ENCODE measurements at regions of chr9 and their contacts with region 1.

Region 1: GRCh38 chr9:121698627-121699570 is 47.5 kb downstream of the DAB2IP start:
- DNase-seq: peak; percentile 47
- H3K4me3 Mint-ChIP-seq: peak overlapping the region; percentile 75
- H3K27ac Mint-ChIP-seq: no peak overlapping the region
- H3K4me1 Mint-ChIP-seq: peaks cover 20% of the 10 kb centered on the region
- H3K27me3 Mint-ChIP-seq: no peaks in the 10 kb centered on the region
- CTCF ChIP-seq: no peak

Region 2: GRCh38 chr9:121718082-121718856 is 19.4 kb after region 1 on chr9:
- CTCF ChIA-PET with region 1: interaction called, 33 read pairs
- POLR2A ChIA-PET with region 1: interaction called, 12 read pairs
- intact Hi-C with region 1: no loop called
- DNase-seq: no peak
- H3K4me3 Mint-ChIP-seq: no peak overlapping the region
- H3K27ac Mint-ChIP-seq: peak overlapping the region; percentile 63
- H3K4me1 Mint-ChIP-seq: peaks cover 35% of the 10 kb centered on the region
- H3K27me3 Mint-ChIP-seq: no peaks in the 10 kb centered on the region
- CTCF ChIP-seq: no peak

Region 3: GRCh38 chr9:121725008-121725775 is 26.3 kb after region 1 on chr9:
- CTCF ChIA-PET with region 1: interaction called, 33 read pairs
- POLR2A ChIA-PET with region 1: interaction called, 12 read pairs
- intact Hi-C with region 1: loop called (anchors 1 kb)
- DNase-seq: peak; percentile 94
- H3K4me3 Mint-ChIP-seq: no peak overlapping the region
- H3K27ac Mint-ChIP-seq: peak overlapping the region; percentile 86
- H3K4me1 Mint-ChIP-seq: peaks cover 37% of the 10 kb centered on the region
- H3K27me3 Mint-ChIP-seq: no peaks in the 10 kb centered on the region
- CTCF ChIP-seq: no peak

Region 4: DNA sequence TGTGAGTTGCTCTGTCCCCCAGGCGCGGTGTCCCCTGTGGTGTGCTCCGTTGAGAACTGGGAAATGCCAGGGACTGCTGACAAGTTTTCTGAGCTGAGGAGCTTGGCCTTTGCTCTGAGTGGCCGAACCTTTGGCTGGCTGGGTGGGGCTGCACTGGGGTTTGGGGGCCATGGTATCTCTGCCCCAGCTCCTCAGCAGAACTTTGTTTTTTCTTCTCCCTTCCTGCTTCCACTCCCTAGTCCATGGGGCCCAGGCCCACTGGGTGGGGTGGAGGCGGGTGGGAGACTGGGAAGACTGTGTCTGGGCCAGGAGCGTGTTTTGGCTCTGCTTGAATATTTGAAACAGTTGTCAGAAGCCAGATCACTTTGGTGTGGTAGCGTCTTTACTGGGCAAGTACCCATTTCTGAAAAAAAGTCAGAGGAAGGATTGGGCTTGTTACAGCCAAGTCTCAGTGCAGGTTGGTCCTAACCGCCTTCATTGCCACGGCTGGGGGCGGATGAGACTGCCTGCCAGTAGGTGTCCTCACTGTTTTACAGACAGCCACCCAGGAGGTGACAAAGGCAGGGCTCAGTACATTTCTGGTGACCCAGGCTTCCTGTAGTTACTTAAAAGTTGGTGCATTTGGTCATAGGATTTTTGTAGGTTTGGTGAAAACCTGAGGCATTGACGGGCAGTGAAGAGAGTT is 45.2 kb after region 1 on chr9:
- CTCF ChIA-PET with region 1: interaction called, 4 read pairs
- POLR2A ChIA-PET with region 1: interaction called, 5 read pairs
- intact Hi-C with region 1: loop called (anchors 2 kb)
- DNase-seq: peak; percentile 40
- H3K4me3 Mint-ChIP-seq: no peak overlapping the region
- H3K27ac Mint-ChIP-seq: no peak overlapping the region
- H3K4me1 Mint-ChIP-seq: peaks cover 14% of the 10 kb centered on the region
- H3K27me3 Mint-ChIP-seq: no peaks in the 10 kb centered on the region
- CTCF ChIP-seq: no peak

Region 5: DNA sequence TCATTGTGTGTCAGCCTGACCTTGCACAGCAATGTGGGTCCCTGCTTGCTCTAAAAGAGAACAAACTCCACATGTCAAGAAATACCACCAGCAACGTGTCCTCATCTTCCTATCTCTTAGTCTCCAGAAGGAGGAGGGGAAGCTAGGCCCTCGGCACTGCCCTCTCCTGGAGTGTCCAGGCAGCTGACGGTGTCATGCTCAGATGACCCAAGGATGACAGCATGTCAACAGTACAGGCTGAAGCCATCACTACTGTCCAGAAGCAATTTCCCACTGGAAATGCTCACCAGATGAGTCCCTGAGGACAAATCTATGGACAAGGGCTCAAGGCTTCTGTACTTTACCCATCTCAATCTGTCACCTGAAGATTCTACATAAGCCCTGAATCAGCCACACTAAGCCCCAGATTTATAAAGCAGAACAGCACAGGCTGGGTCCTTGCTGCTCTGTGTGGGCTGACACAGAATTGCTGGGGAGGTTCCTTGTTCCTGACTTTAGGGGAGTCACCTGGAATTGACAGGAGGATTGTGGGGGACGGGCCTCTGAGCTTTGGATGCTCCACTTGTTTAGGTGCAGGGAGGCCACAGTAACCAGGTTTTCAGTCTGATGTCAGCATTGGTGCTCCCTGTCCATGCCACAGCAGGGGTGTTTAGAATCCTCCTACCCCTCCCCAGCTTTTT is 162.7 kb after region 1 on chr9:
- CTCF ChIA-PET with region 1: no interaction called
- POLR2A ChIA-PET with region 1: no interaction called
- intact Hi-C with region 1: loop called (anchors 1 kb)
- DNase-seq: peak; percentile 44
- H3K4me3 Mint-ChIP-seq: no peak overlapping the region
- H3K27ac Mint-ChIP-seq: no peak overlapping the region
- H3K4me1 Mint-ChIP-seq: no peaks in the 10 kb centered on the region
- H3K27me3 Mint-ChIP-seq: no peaks in the 10 kb centered on the region
- CTCF ChIP-seq: peak; percentile 29

Region 6: GRCh38 chr9:121992571-121993212 is 293.8 kb after region 1 on chr9:
- CTCF ChIA-PET with region 1: interaction called, 3 read pairs
- POLR2A ChIA-PET with region 1: interaction called, 4 read pairs
- intact Hi-C with region 1: loop called (anchors 1 kb)
- DNase-seq: peak; percentile 83
- H3K4me3 Mint-ChIP-seq: no peak overlapping the region
- H3K27ac Mint-ChIP-seq: no peak overlapping the region
- H3K4me1 Mint-ChIP-seq: peaks cover 5% of the 10 kb centered on the region
- H3K27me3 Mint-ChIP-seq: no peaks in the 10 kb centered on the region
- CTCF ChIP-seq: peak; percentile 56

Region 7: DNA sequence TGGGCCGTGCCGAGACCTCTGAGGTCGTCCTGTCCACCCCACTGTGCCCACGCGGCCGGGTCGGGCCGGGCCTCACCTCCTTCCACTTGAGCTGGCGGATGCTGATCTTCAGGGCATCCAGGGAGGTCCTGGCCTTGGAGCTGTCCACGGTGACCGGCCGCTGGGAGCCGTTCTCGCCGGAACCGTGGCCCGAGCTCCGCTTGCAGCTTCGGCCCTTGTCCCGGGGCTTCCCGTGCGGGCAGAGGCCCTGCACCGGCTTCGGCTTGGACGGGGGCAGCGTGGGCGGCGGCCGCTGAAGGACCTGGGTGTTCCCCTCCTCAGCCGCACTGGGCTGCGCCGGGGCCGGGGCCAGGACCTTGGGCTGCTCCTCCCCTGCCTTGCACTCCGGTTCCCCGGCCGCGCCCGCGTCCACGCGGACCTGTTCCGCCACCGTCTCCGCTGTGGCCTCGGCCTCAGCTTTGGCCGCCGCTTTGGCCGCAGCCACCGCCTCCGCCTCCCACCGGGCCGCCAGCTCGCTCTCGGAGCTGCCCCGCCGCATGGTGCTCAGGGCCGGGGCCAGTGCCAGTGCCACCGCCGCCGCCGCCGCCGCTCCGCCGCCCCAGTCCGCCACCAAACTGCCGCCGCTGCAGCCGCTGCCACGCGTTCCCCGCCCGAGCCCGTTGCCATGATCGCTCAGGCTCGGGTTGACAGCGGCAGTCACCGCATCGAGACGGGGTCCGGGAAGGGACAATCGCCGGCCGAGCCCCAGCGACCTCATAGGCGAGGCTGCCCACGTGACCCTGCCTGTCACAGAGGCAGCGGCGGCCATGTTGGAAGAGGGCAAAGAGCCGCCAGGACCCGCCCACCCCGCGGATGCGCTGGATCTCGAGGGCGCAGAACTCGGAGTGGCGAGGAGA is 394.0 kb after region 1 on chr9 and contains the start of gene TTLL11:
- CTCF ChIA-PET with region 1: no interaction called
- POLR2A ChIA-PET with region 1: no interaction called
- intact Hi-C with region 1: no loop called
- DNase-seq: peak; percentile 95
- H3K4me3 Mint-ChIP-seq: peak within 1 kb of the TSS; percentile 91
- H3K27ac Mint-ChIP-seq: peak within 1 kb of the TSS; percentile 57
- H3K4me1 Mint-ChIP-seq: peaks cover 33% of the 10 kb centered on the region
- H3K27me3 Mint-ChIP-seq: no peaks in the 10 kb centered on the region
- CTCF ChIP-seq: no peak
- total RNA-seq, gene TTLL11: 9.0 and 13.6 TPM in 2 replicates

Measured in MCF 10A (cell line).